RWPE1 (cell line): ENCODE measurements at regions of chr17 and their contacts with region 1.

Region 1: DNA sequence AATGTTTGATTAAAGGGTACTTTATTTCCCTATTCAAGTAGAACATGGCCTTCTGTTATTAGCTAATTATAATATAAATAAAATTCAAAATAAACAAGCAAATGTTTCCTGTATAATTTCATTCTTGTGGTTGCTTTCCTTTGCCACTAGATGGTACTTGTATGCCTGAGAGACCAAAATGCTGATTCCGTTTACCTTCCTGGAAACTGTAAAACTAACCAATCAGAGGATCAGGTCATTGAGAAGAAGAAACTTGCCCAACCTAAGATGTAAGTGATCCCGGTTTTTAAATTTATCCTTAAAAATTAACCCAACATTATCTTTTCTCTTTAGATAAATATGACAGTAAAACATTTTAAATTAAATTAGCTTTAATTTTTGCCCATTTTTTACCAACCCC is 8.1 kb upstream of the ABCA5 start:
- DNase-seq: peak; percentile 54
- H3K27ac ChIP-seq: no peak overlapping the region
- CTCF ChIP-seq: peak; percentile 61

Region 2: DNA sequence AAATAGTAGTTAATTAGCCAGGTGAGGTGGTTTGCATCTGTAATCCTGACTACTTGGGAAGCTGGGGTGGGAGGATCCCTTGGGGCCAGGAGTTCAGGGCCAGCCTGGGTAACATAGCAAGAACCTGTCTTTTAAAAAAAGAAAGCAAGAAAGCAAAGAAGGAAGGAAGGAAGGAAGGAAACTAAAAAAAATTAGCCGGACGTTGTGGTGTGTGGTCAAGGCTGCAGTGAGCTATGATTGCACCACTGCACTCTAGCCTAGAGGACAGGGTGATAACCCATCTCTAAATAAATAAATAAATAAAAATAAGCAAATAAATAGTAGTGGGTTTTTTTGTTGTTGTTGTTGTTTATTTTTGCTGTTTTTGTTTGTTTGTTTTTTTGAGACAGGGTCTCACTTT is 40.2 kb after region 1 on chr17:
- CTCF ChIA-PET with region 1: no interaction called
- POLR2A ChIA-PET with region 1: no interaction called
- DNase-seq: no peak
- H3K27ac ChIP-seq: no peak overlapping the region
- CTCF ChIP-seq: no peak

Region 3: GRCh38 chr17:69523244-69523861 is 188.3 kb after region 1 on chr17:
- CTCF ChIA-PET with region 1: interaction called, 23 read pairs
- POLR2A ChIA-PET with region 1: no interaction called
- DNase-seq: peak; percentile 42
- H3K27ac ChIP-seq: no peak overlapping the region
- CTCF ChIP-seq: peak; percentile 78

Region 4: DNA sequence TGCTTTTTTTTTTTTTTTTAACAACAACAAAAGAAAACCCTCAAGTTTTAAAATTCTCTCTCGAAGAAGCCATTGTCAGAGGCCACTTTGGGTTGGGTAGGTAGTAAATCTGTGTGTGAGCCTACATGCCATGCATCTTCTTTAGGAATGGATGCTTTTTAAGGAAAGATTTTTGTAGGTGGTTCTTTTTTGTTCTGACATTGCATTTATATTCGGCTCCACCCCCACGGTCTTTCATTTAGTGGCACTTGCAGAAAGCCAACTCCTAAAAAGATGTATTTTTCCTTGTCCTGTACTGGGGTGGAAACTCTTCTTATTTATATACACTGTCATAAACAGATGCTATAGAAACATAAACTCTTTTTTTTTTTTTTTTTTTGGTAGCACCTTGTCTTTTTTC is 869.4 kb after region 1 on chr17:
- CTCF ChIA-PET with region 1: interaction called, 15 read pairs
- POLR2A ChIA-PET with region 1: no interaction called
- DNase-seq: no peak
- H3K27ac ChIP-seq: no peak overlapping the region
- CTCF ChIP-seq: no peak